Activated T-helper 1 cell treated with anti-CD3 and anti-CD28 coated beads, Interleukin-12 subunit alpha, Interleukin-12 subunit beta, Interleukin-2, Interleukin-4 antibody, amounts not matched to agents 30 ng/mL and 10 ng/mL and 1 ng/mL, durations not matched to agents 14 hours and 24 hours and 36 hours (primary cell): ENCODE measurements at regions of chr1 and their contacts with region 1.

Region 1: DNA sequence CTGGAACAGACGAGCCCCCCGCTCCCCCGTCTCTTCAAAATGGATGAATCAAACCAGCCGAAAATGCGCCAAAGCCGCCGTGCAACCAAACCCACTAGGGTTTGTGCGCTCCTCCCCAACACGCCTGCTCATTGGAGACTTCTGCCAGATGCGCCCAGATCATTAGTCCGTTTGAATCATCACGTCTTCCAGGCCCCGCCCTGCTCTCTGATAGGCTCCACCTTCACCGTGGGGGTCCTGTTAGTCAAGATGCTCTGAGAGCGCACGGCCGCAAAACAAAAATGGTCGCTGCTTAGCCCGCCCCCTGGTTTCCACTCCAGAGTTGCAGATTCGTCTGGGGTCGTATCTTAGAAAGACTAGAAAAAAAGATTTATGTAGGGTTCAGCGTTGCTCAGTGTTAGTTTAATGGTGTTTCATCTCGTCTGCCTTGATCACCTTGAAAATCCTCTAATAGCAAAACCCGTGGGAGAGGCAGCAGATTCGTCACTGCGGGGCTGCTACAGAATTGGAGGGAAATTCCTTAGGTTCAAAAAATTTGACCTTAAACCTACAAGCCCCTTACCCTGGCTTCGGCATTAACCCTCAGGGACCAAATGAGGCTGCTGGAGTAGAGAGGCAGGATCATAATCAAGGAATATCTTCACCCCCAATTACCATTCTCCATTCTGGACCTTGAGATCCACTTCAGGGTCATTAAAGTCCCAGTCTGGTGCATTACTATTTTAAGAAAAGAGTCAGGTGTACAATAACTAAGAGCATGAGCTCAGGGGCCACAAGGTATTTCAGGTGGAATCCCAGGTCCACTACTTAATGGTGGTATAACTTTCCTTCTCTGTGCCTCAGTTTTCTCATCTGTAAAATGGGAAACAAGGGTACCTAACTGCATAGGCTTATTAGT is at the start of gene NUCKS1:
- DNase-seq: peak; percentile 96
- H3K4me3 Mint-ChIP-seq: peak within 1 kb of the TSS; percentile 99
- H3K27ac Mint-ChIP-seq: peak within 1 kb of the TSS; percentile 97
- H3K4me1 Mint-ChIP-seq: peaks cover 46% of the 10 kb centered on the region
- H3K27me3 Mint-ChIP-seq: no peaks in the 10 kb centered on the region
- total RNA-seq, gene NUCKS1: 146 and 147 TPM in 2 replicates

Region 2: GRCh38 chr1:205211169-205211838 is 539.1 kb before region 1 on chr1 and contains the start of gene DSTYK:
- intact Hi-C with region 1: loop called (anchors 10 kb)
- DNase-seq: peak; percentile 89
- H3K4me3 Mint-ChIP-seq: peak within 1 kb of the TSS; percentile 99
- H3K27ac Mint-ChIP-seq: peak within 1 kb of the TSS; percentile 94
- H3K4me1 Mint-ChIP-seq: peaks cover 49% of the 10 kb centered on the region
- H3K27me3 Mint-ChIP-seq: no peaks in the 10 kb centered on the region
- total RNA-seq, gene DSTYK: 34.2 and 35.9 TPM in 2 replicates

Region 3: GRCh38 chr1:205670150-205670446 is 80.3 kb before region 1 on chr1:
- intact Hi-C with region 1: no loop called
- DNase-seq: no peak
- H3K4me3 Mint-ChIP-seq: no peak overlapping the region
- H3K27ac Mint-ChIP-seq: no peak overlapping the region
- H3K4me1 Mint-ChIP-seq: no peaks in the 10 kb centered on the region
- H3K27me3 Mint-ChIP-seq: peaks cover 11% of the 10 kb centered on the region

Region 4: DNA sequence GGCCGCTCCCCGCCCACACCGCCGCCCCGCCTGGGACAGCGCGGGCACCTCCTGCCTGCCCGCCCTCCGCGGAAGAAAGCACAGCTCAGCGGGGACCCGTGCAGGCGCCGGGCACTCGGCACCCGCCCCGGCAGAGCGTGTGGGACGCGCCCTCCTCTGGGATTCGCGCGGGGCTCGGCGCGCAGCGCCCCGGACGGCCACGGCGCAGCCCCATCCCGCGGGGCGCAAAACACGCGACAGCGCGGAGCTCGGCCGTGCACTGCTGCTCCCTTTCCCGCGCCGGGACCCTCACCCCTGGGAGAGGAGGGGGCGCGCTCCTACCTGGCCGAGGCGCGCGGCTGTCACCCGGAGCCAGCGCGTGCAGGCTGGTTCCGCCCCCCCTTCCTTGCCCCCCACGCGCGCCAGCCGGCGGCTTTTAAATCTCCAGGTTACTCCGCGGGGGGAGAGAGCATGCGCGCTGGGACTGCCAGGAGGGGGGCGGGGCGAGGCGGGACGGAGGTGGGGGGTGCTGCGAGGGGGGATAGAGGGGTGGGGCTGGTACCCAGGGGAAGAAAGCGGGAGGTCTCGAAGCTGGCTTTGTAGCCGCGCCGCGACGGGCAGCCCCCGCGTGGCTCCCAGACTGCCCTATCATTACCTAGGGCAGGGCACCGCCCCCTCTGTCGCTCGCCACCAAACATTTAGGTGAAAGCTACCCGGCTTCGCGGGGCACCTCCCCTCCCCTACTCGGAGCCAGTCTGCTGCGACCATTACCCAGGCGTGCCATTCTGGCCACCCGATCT is 70.1 kb before region 1 on chr1 and contains the start of gene SLC45A3:
- intact Hi-C with region 1: loop called (anchors 2 kb)
- DNase-seq: no peak
- H3K4me3 Mint-ChIP-seq: peak within 1 kb of the TSS; percentile 82
- H3K27ac Mint-ChIP-seq: no peak within 1 kb of the TSS
- H3K4me1 Mint-ChIP-seq: peaks cover 14% of the 10 kb centered on the region
- H3K27me3 Mint-ChIP-seq: peaks cover 33% of the 10 kb centered on the region
- total RNA-seq, gene SLC45A3: 0.81 and 1.1 TPM in 2 replicates

Region 5: DNA sequence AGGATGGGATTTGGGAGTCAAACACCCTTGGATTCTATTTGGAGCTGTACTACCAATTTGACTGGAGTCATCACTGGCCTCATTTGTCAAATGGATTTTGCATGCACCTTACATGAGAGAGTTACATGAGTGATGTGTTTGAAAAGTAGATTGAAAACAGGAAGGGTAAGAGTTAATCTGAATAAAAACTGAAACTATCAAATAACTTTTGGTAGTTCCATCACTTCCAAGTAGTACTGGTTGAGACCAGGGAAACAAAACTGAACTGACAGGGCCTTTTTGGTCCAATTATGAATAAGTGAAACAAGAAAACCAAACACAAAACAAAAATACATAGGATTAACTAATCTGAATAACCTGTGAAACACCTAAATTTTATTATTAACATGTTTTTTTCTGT is 30.6 kb before region 1 on chr1:
- intact Hi-C with region 1: loop called (anchors 1 kb)
- DNase-seq: no peak
- H3K4me3 Mint-ChIP-seq: peak overlapping the region; percentile 20
- H3K27ac Mint-ChIP-seq: peak overlapping the region; percentile 70
- H3K4me1 Mint-ChIP-seq: peaks cover 37% of the 10 kb centered on the region
- H3K27me3 Mint-ChIP-seq: no peaks in the 10 kb centered on the region

Region 6: GRCh38 chr1:205775015-205775716 is 24.8 kb after region 1 on chr1 and contains the start of gene RAB29:
- intact Hi-C with region 1: loop called (anchors 1 kb)
- DNase-seq: peak; percentile 82
- H3K4me3 Mint-ChIP-seq: peak within 1 kb of the TSS; percentile 88
- H3K27ac Mint-ChIP-seq: peak within 1 kb of the TSS; percentile 93
- H3K4me1 Mint-ChIP-seq: peaks cover 59% of the 10 kb centered on the region
- H3K27me3 Mint-ChIP-seq: no peaks in the 10 kb centered on the region
- total RNA-seq, gene RAB29: 37.2 and 38.1 TPM in 2 replicates

Region 7: DNA sequence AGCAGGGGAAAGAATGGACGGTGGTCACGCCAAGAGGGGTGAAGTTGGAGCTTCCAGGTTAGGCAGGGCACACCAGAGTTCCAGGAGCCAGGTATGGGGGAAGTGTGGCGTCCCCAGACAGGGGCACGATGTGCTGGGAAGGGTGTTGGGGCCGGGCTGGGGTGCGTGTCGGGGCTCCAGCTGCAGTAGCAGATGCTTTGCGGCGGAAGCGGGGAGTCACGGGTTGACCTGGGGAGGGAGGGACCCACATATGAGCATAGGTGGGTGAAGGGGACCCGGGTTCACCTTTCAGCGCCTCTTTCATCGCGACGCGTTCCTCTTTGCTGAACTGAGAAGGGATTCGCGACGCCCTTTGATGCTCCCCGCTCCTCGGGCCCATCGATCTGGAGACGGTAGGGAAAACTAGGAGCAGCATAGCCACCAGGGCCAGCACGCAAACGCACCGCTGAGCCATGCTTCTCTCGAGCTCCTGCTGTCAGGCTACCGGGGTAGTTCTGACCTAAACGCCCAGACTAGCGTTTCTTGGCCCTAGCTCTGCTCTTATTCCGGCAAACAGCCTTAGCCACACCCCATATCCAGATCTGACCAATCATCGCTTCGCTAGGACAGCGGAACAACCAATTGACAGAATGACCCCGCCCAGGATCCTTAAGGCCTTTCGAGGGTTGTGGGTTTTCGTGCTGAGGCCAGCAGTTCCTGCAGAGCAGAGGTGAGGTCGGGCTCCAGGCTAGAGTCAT is 99.4 kb after region 1 on chr1 and contains the start of gene PM20D1:
- intact Hi-C with region 1: loop called (anchors 5 kb)
- DNase-seq: peak; percentile 86
- H3K4me3 Mint-ChIP-seq: peak within 1 kb of the TSS; percentile 89
- H3K27ac Mint-ChIP-seq: peak within 1 kb of the TSS; percentile 85
- H3K4me1 Mint-ChIP-seq: peaks cover 23% of the 10 kb centered on the region
- H3K27me3 Mint-ChIP-seq: peaks cover 8% of the 10 kb centered on the region
- total RNA-seq, gene PM20D1: 0.29 and 0.39 TPM in 2 replicates

Region 8: DNA sequence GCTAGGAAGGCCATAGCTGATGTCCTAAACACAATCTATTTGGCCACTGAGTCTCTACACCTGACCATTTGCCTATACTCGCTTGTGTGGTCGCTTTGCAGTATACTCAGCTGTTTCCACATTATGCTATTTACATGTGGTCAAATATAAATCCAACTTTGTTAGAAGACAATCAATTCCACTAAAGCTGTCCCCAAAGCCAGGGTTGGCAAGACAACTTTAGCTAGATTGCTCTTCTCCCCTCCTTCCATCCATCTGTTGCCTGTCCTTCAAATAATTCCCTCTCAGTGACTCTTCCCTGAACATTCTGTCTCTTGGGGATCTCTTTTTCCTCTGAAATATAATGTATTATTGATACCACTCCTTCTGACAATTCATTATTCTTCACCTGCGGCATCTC is 336.7 kb after region 1 on chr1:
- intact Hi-C with region 1: no loop called
- DNase-seq: no peak
- H3K4me3 Mint-ChIP-seq: no peak overlapping the region
- H3K27ac Mint-ChIP-seq: no peak overlapping the region
- H3K4me1 Mint-ChIP-seq: no peaks in the 10 kb centered on the region
- H3K27me3 Mint-ChIP-seq: peaks cover 38% of the 10 kb centered on the region